Right ventricle myocardium superior (tissue), 1 donor: ENCODE measurements at regions of chr5 and their contacts with region 1.

Region 1: DNA sequence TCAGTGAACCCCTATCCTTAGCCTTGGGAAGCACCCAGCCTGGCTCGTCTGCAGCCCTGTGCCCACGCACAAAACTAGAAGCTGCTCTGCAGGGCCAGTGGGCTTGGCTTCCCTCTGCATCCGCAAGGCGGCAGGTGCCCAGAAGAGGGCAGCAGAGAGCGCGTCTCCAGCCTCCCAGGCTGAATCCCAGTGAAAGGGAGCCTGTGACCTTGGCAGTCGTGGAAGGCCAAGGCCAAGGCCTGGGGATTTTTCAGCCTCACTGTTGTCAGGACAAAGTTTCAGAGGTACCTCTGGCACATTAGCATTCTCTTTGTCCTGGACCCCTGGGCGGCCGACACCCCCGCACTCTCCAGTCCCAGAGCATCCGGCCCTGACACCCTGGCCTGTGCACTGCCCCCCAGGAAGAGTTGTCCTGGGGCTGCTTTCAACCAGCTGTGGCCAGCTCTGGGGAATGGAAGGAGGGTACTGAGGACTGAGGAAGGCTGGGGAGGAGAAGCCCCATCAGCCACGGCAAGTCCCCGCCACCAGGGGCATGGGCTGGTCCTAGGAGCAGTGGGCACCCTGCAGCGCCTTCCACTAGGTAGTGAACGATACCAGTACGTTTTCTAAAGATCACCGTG is 63.6 kb upstream of the IL17B start:
- DNase-seq: peak; percentile 91
- ATAC-seq: peak; percentile 91

Region 2: DNA sequence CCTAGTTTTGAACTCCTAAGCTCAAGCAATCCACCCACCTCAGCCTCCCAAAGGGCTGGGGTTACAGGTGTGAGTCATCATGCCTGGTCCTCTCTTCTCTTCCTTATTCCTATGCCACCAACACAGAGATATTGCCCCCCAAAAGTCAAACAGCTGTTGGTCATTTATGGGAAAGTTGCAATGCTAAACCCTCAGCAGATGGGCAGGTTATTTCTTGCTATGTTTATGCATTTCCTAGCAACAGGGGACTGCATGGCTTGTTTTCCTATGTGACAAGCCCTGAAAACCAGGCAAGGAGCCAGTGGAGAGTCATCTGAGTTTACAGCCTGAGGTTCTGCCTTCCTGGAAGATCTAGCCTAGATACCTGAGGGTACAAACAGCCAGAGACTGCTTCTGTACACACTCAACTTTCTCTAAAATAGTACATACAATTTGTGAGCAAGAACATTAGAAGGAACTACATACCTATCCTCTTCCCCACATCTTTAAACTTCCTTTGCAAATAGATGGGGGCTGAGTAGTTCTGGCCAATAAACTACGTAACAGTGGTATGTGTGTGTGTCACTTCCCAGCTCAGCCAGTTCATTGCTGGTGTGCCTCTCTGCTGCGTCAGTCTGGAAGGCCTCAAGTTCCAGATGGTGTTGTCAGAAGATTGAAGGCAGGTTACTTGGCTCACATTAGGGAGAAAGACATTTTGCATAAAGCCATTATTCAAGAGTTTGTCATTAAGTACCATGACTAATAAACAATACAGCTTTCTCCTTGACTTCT is 43.2 kb after region 1 on chr5:
- intact Hi-C with region 1: loop called (anchors 5 kb)
- DNase-seq: peak; percentile 67
- ATAC-seq: peak; percentile 79

Region 3: DNA sequence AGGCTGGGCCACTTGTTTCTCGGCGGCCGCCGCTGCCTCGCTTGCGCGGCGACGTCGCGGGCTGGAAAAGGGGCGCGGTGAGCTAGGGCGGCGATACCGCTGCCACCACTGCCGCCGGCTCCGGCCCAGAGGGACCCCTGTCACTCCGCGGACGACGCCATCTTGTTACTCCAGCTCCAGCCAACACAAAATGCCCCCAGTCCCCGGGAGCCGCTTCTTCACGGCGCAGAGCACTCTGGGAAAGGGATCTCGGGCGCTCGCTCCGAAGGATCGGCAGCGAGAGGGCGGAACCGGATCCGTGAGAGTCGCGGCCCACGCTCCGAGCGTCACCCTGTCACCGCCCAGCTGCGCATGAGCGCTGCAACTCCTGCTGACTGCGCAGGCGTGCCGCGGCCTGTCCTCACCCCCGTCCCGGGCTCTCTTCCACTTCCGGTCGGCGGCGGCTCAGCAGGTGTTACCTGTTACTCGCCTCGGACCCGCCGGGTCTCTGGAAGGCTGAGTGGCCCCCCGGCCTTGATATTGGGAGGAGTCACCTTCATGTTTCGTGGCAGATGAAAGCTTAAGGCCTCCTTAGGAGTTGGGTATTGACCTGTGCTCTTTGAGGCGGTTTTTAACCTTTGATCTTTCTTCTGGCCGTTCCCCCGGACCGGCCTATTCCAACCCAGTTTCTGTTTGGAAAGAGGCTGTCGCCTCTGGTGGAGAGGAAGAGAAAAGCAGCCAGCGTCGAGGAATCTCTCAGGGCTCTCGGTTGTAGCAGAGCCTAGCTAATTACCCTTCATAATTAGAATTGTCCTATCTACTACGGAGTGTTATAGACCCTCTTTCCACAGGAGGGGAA is 108.7 kb after region 1 on chr5 and contains the start of gene CSNK1A1:
- intact Hi-C with region 1: loop called (anchors 2 kb)
- DNase-seq: peak; percentile 99
- ATAC-seq: peak; percentile 97
- total RNA-seq, gene CSNK1A1: 191 TPM

Region 4: DNA sequence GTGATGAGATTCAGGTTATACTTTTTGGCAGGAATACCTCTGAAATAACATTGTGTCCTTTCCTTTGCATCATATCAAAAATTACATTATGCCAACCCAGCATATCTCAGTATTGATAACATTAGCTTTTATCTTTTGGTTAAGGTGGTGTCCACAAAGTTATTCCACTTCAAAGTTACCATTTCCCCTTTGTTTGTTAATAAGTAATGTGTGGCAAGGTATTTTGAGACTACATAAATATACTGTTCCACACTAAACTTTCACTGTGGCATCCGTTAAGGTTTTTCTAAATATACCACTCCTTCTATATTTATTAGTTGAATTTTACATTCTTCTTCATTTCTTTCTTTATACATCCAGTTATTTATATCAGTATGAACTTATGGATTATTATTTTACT is 124.6 kb after region 1 on chr5:
- intact Hi-C with region 1: loop called (anchors 5 kb)
- DNase-seq: no peak
- ATAC-seq: no peak